Dendritic cell treated with granulocyte-macrophage colony-stimulating factor and Interleukin-4, amounts not matched to agents 40 ng/mL and 50 ng/mL, for 4 days (primary cell): ENCODE measurements at regions of chr1 and their contacts with region 1.

Region 1: DNA sequence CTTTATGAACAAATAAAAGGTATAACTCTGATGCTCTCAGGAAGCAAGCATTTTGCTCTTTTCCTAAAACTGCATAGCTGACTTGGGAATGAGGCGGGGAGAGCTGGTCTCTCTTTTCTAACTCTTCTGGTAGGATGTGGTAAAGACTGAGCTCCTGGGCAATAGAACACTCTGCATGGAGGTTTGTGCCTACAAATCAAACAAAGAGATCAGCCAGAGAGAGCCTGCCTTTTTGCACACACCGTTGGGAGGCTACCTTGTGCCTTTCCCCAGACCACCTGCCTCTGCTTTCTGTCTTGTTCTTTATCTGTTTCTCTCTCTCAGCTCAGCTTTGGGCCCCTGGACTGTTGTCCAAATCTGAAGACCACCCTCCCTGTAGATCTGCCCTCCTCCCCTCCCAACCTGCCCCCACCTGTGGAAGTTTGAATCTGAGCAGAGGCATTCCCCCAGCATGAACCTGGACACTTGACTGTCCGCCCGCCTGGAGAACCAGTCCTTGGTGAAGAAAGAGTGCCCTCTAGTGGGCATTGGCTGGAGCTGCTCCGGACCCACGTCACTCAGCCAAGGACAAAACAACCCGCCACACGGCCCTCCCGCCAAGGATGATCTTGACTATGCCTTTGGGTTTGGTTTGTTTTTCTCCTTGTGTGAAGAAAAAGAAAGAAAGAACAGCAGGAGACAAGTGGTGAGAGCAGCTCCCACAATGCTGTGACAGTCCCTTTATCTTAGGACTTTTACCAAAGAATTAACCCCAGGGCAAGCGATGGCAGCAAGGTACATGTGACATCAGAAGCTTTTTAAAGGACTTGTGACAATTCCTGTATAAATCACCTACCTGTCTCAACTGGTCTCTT is 228.2 kb downstream of the PBX1 start:
- H3K4me3 Mint-ChIP-seq: no peak overlapping the region
- H3K27ac Mint-ChIP-seq: no peak overlapping the region
- H3K4me1 Mint-ChIP-seq: peaks cover 5% of the 10 kb centered on the region
- H3K27me3 Mint-ChIP-seq: peaks cover 12% of the 10 kb centered on the region

Region 2: DNA sequence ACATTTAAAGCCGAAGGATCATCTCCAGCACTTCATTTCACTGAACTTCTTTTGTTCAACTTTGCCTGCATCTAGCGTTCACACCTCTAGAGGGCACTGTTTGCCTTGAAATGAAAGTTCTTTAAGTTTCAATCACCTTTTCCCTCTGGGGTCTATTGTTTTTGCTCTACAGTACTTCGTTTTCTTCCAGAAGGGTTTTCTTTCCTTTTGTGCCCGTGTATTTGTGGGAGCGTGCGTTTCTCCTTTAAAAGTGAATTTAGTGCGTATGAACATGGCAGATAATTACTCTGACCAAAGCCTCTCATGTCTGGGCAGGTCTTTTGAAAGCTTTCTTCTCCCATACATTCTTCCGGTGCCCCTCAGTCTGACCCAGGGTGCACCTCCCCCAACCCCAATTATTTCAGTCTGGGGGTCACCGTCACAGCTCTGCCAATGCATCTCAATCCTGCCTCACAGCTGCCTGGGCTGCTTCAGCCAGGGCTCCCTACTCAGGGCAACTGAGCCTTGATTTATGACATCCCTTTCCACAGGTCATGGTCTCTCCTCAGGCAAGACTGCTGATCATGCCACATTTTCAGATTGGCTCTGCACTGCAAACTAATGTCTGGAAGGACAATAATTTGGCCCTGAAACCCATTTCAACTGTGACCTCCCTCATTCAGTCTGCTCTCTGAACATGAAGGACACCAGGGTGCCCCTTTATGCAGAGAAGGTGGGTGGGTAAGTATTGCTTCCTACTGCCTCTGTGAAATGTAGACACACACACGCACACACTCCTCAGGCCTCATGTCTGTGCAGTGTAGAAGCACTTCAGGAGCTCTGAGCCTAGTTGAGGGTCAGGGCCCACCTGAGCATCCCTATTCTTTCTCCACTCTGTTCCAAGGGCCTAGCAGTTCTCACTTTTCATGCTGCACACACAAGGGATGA is 1376.9 kb before region 1 on chr1:
- intact Hi-C with region 1: loop called (anchors 2 kb)
- H3K4me3 Mint-ChIP-seq: no peak overlapping the region
- H3K27ac Mint-ChIP-seq: no peak overlapping the region
- H3K4me1 Mint-ChIP-seq: peaks cover 5% of the 10 kb centered on the region
- H3K27me3 Mint-ChIP-seq: no peaks in the 10 kb centered on the region

Region 3: DNA sequence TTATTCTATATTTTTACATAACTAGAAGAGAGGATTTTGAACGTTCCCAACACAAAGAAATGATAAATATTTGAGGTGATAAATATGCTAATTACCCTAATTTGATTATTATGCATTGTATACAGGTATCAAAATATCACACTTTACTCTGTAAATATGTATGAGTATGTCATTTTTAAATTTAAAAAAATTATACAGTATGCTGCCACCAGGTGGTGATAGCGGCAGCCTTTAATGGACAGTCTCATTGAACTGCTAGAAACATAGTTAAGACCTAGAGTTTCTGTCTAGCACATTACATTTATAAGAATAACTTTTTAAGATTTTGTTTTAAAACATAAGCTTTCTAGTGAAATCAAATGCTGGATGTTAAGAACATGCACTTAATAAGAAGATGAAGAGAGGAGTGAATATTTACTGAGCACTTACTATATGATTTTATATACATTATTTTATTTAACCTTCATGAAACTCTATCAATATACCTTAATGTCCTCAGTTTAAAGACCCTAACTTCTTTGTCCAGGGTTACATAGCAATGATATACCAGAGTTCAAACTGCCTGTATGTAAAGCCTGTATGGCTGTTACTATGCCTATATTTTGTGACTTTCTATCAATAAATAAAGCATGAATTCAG is 1258.4 kb before region 1 on chr1:
- intact Hi-C with region 1: loop called (anchors 2 kb)
- H3K4me3 Mint-ChIP-seq: no peak overlapping the region
- H3K27ac Mint-ChIP-seq: no peak overlapping the region
- H3K4me1 Mint-ChIP-seq: no peaks in the 10 kb centered on the region
- H3K27me3 Mint-ChIP-seq: no peaks in the 10 kb centered on the region

Region 4: GRCh38 chr1:164637461-164638375 is 149.5 kb before region 1 on chr1:
- intact Hi-C with region 1: no loop called
- H3K4me3 Mint-ChIP-seq: no peak overlapping the region
- H3K27ac Mint-ChIP-seq: no peak overlapping the region
- H3K4me1 Mint-ChIP-seq: peaks cover 6% of the 10 kb centered on the region
- H3K27me3 Mint-ChIP-seq: peaks cover 4% of the 10 kb centered on the region

Region 5: GRCh38 chr1:164673584-164674214 is 113.5 kb before region 1 on chr1:
- intact Hi-C with region 1: loop called (anchors 1 kb)
- H3K4me3 Mint-ChIP-seq: no peak overlapping the region
- H3K27ac Mint-ChIP-seq: no peak overlapping the region
- H3K4me1 Mint-ChIP-seq: no peaks in the 10 kb centered on the region
- H3K27me3 Mint-ChIP-seq: peaks cover 4% of the 10 kb centered on the region